ENCODE measurements at regions of chr2 and their contacts with region 1.

Region 1: GRCh38 chr2:175111200-175111657 is 56.8 kb downstream of the ATF2 start:
- DNase-seq: no peak
- H3K4me3 Mint-ChIP-seq: no peak overlapping the region
- H3K27ac Mint-ChIP-seq: peak overlapping the region; percentile 12
- H3K4me1 Mint-ChIP-seq: peaks cover 3% of the 10 kb centered on the region
- H3K27me3 Mint-ChIP-seq: no peaks in the 10 kb centered on the region

Region 2: GRCh38 chr2:174436351-174436750 is 674.9 kb before region 1 on chr2:
- intact Hi-C with region 1: no loop called
- DNase-seq: no peak
- H3K4me3 Mint-ChIP-seq: no peak overlapping the region
- H3K27ac Mint-ChIP-seq: no peak overlapping the region
- H3K4me1 Mint-ChIP-seq: no peaks in the 10 kb centered on the region
- H3K27me3 Mint-ChIP-seq: no peaks in the 10 kb centered on the region

Region 3: GRCh38 chr2:174697255-174697654 is 414.0 kb before region 1 on chr2:
- intact Hi-C with region 1: loop called (anchors 5 kb)
- DNase-seq: peak; percentile 89
- H3K4me3 Mint-ChIP-seq: no peak overlapping the region
- H3K27ac Mint-ChIP-seq: no peak overlapping the region
- H3K4me1 Mint-ChIP-seq: peaks cover 6% of the 10 kb centered on the region
- H3K27me3 Mint-ChIP-seq: peaks cover 35% of the 10 kb centered on the region

Region 4: DNA sequence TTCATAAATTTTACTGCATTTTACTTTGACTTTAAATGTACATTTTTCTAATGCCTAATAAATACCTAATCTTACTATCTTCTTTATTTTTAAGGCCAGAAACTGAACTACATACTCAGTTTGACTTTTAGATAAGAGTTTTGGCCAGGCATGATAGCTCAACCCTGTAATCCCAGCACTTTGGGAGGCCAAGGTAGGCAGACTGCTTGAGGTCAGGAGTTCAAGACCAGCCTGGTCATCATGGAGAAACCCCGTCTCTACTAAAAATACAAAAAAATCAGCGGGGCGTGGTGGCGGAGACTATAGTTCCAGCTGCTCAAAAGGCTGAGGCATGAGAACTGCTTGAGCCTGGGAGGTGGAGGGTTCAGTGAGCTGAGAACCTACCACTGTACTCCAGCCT is 47.7 kb after region 1 on chr2:
- intact Hi-C with region 1: no loop called
- DNase-seq: no peak
- H3K4me3 Mint-ChIP-seq: no peak overlapping the region
- H3K27ac Mint-ChIP-seq: no peak overlapping the region
- H3K4me1 Mint-ChIP-seq: peaks cover 23% of the 10 kb centered on the region
- H3K27me3 Mint-ChIP-seq: no peaks in the 10 kb centered on the region

Region 5: DNA sequence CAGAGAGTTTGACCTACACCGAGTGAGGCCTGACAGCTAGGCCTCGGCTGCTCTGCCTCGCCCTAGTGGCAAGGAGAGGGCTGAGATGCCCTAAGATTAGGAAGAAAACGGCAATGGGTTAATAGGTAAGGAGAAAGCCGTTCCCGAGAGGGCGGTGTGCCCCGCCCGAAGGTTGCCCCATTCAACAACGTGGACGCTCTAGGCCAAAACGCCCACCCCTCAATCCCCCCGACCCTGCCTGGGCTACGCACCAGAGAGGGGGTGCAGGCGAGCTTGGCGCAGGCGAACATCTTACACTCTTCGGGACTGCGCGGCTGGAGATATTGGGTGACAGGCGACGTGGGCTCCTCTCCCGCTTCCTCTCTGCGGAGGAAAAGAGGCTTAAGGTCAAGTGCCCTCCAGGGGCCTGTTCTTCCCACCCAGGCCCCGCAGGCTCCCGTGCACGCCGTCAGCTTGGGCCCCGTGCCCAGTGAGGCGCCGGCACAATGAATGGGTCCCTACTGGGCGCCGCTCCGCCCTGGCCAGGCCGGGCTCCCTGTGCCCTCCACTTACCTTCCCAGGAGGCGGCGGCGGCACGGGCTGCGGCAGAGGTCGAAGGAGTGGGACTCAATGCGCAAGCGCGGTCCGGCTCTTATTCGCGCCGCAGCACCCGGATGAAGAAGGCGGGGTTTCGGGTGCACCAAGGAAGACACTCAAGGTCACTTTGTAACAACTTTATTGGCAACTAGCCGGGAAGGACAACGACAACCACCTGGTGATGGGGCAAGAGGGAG is 70.1 kb after region 1 on chr2 and contains the start of gene ATP5MC3:
- intact Hi-C with region 1: loop called (anchors 1 kb)
- DNase-seq: peak; percentile 97
- H3K4me3 Mint-ChIP-seq: peak within 1 kb of the TSS; percentile 88
- H3K27ac Mint-ChIP-seq: peak within 1 kb of the TSS; percentile 94
- H3K4me1 Mint-ChIP-seq: peaks cover 20% of the 10 kb centered on the region
- H3K27me3 Mint-ChIP-seq: no peaks in the 10 kb centered on the region
- total RNA-seq, gene ATP5MC3: 405 and 414 TPM in 2 replicates

Region 6: DNA sequence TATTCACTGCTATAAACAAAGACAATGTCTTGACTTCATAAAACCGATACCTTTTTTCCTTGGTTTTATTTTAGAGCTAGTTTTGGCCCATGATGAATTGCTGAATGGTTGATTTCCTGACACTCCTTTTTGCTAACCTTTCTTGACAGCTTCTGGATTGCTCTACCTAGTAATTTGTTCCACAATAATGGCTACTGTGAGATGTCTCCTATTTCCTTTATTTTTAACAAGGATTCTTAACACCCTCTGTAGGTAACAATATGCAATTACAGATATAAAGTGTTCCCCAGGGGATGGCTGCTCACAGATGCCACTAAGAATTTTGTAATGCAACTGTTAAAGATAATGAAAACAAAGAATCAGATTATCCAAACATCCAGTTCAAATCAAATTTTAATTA is 171.1 kb after region 1 on chr2:
- intact Hi-C with region 1: loop called (anchors 1 kb)
- DNase-seq: no peak
- H3K4me3 Mint-ChIP-seq: no peak overlapping the region
- H3K27ac Mint-ChIP-seq: no peak overlapping the region
- H3K4me1 Mint-ChIP-seq: peaks cover 2% of the 10 kb centered on the region
- H3K27me3 Mint-ChIP-seq: peaks cover 31% of the 10 kb centered on the region

Region 7: GRCh38 chr2:175309799-175310198 is 198.6 kb after region 1 on chr2:
- intact Hi-C with region 1: no loop called
- DNase-seq: no peak
- H3K4me3 Mint-ChIP-seq: no peak overlapping the region
- H3K27ac Mint-ChIP-seq: no peak overlapping the region
- H3K4me1 Mint-ChIP-seq: no peaks in the 10 kb centered on the region
- H3K27me3 Mint-ChIP-seq: peaks cover 24% of the 10 kb centered on the region

Measured in activated CD4-positive, alpha-beta T cell treated with anti-CD3 and anti-CD28 coated beads, Interleukin-2, amount 10 ng/mL, durations not matched to agents 24 days and 14 days (primary cell).